ENCODE measurements at regions of chr20 and their contacts with region 1.

Region 1: GRCh38 chr20:17796091-17796563 is 96.4 kb downstream of the BANF2 start:
- DNase-seq: peak; percentile 72 to 90 (median 86)
- ATAC-seq: peak; percentile 83 to 91 (median 86)
- H3K4me3 ChIP-seq: no peak overlapping the region
- H3K27ac ChIP-seq: peak overlapping the region; percentile 70 to 88 (median 84)
- H3K4me1 ChIP-seq: peaks cover 0 to 38% (median 18%) of the 10 kb centered on the region in 4 donors
- H3K27me3 ChIP-seq: no peaks in the 10 kb centered on the region
- CTCF ChIP-seq: no peak
- POLR2A ChIP-seq: peak; percentile 25

Region 2: GRCh38 chr20:17710379-17711266 is 85.5 kb before region 1 on chr20:
- intact Hi-C with region 1: loop called in 1 of 2 experiments (anchors 10 kb)
- DNase-seq: peak in 2 of 3 donors; percentile 61 to 63
- ATAC-seq: peak; percentile 88 to 97 (median 95)
- H3K4me3 ChIP-seq: no peak overlapping the region
- H3K27ac ChIP-seq: no peak overlapping the region
- H3K4me1 ChIP-seq: peaks cover 0 to 12% (median 8%) of the 10 kb centered on the region in 4 donors
- H3K27me3 ChIP-seq: no peaks in the 10 kb centered on the region
- CTCF ChIP-seq: no peak
- POLR2A ChIP-seq: no peak

Region 3: DNA sequence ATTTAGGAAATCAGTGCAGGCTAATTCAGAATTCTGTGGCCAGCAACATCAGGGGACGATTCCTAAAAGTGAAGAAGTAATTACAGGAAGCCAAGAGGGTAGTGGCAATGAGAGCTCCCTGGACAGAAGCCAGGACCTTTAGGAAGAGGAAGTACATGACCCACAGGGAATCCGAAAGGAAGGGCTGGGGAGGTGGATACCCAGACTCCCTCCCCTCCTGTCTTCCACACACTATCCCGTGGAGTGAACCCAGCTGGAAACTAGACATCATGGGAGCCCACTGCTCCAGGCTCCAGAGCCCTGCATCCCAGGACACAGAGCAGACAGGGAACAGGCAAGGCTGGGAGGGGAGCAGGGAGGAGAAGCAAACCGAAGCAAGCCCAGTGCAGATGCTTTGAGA is 89.4 kb after region 1 on chr20:
- intact Hi-C with region 1: loop called in 1 of 2 experiments (anchors 10 kb)
- DNase-seq: no peak
- ATAC-seq: peak; percentile 19 to 52 (median 26)
- H3K4me3 ChIP-seq: no peak overlapping the region
- H3K27ac ChIP-seq: no peak overlapping the region
- H3K4me1 ChIP-seq: peaks cover 0 to 7% (median 2%) of the 10 kb centered on the region in 4 donors
- H3K27me3 ChIP-seq: no peaks in the 10 kb centered on the region
- CTCF ChIP-seq: no peak
- POLR2A ChIP-seq: no peak

Measured in right lobe of liver (tissue), 6 donors.